Naive thymus-derived CD4-positive, alpha-beta T cell (primary cell): ENCODE measurements at regions of chr14 and their contacts with region 1.

Region 1: DNA sequence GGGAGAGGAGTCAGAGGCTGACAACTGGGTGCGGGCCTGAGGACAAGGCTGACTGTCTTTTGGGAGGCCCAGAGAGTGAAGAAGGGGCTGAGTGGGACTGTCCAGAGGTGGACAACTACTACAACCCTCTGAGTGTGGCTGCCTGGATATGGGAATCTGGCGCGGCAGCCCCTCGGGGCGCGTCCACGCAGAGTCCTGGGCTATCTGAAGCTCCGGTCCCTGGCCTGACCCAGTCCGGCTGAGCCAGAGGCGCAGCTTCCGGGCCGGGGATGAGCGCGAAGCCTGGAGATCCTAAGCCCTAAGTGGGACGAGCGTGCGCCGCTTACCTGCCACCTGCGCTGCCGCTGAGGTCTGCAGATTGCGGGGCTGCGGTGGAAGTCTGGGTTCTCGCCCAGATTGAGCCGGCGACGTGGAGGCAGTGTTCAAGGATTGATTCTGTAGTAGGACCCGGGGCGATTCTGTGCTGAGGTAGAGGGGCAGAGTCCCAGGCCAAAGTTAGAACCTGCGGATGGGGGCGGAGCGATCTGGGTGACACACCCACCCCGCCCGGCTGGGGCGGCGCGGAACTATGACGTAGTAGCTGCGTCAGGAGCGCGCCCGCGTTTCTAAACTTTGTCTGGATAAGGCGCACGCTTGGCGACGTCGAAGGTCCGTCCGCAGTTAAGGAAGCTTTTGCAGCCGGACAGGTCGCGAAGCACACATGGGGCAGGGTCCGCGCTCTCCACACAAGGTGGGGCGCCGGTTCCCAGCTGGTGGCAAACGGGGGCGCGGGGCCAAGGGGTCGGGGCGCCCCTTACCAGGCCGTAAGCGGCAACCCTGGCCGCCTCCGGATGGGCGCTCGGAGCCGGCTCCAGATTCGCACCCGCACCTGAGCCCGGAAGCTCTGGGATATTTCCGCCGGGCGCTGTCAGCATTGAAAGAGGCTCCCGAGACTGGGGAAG is at the starts of genes DHRS1 and NOP9:
- DNase-seq: peak; percentile 86 to 95 (median 92)
- ATAC-seq: peak; percentile 93
- H3K4me3 ChIP-seq: peak within 1 kb of the TSS; percentile 83
- H3K4me3 Mint-ChIP-seq: peak within 1 kb of the TSS; percentile 89 to 97 (median 94)
- H3K27ac ChIP-seq: peak within 1 kb of the TSS; percentile 97
- H3K27ac Mint-ChIP-seq: peak within 1 kb of the TSS; percentile 91 to 98 (median 96)
- H3K4me1 ChIP-seq: peaks cover 19 to 43% of the 10 kb centered on the region in 2 donors
- H3K4me1 Mint-ChIP-seq: peaks cover 28 to 67% (median 55%) of the 10 kb centered on the region in 7 donors
- H3K27me3 ChIP-seq: no peaks in the 10 kb centered on the region
- H3K27me3 Mint-ChIP-seq: no peaks in the 10 kb centered on the region
- total RNA-seq, gene DHRS1: 25.2 to 37.0 (median 33.3) TPM
- total RNA-seq, gene NOP9: 22.7 to 39.5 (median 29.8) TPM

Region 2: DNA sequence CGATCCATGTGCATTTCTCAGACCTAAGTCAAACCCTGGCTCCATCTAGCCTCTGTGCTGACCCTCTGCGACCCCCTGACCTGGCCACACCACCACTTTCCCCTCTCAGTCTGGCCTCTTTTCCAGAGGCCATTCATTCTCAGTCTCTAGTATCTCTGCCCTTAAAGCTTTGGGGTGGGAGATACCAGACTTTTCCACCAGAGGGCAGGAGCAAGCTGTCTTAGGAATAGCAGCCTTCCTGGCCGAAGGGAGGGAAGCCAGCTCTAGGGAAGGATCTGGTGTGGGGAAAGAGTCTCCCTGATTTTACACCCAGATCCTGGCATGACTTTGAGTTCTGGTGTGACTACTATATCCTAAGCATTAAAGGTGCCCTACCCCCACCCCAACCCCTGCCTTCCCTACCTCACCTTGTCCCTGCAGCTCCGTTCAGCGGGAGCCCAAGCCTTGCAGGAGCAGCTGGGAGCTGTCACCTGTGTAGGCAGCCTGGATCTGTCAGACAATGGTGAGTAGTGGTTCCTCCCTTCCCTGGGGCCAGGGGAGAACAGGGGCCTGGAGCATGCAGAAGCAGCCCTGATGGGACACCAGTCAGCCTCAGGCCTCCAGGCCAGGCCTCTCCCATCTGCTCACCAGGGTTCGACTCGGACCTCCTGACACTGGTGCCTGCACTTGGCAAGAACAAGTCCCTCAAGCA is 241.1 kb before region 1 on chr14:
- CTCF ChIA-PET with region 1: interaction called, 8 read pairs
- POLR2A ChIA-PET with region 1: no interaction called
- intact Hi-C with region 1: loop called in 1 of 2 experiments (anchors 1 kb)
- DNase-seq: peak; percentile 22 to 70 (median 49)
- ATAC-seq: peak; percentile 84
- H3K4me3 ChIP-seq: no peak overlapping the region
- H3K4me3 Mint-ChIP-seq: no peak overlapping the region
- H3K27ac ChIP-seq: no peak overlapping the region
- H3K27ac Mint-ChIP-seq: peak overlapping the region in 5 of 9 donors; percentile 22 to 80 (median 67)
- H3K4me1 ChIP-seq: no peaks in the 10 kb centered on the region
- H3K4me1 Mint-ChIP-seq: peaks cover 0 to 8% (median 2%) of the 10 kb centered on the region in 7 donors
- H3K27me3 ChIP-seq: no peaks in the 10 kb centered on the region
- H3K27me3 Mint-ChIP-seq: peaks cover 0 to 8% (median 2%) of the 10 kb centered on the region in 5 donors

Region 3: DNA sequence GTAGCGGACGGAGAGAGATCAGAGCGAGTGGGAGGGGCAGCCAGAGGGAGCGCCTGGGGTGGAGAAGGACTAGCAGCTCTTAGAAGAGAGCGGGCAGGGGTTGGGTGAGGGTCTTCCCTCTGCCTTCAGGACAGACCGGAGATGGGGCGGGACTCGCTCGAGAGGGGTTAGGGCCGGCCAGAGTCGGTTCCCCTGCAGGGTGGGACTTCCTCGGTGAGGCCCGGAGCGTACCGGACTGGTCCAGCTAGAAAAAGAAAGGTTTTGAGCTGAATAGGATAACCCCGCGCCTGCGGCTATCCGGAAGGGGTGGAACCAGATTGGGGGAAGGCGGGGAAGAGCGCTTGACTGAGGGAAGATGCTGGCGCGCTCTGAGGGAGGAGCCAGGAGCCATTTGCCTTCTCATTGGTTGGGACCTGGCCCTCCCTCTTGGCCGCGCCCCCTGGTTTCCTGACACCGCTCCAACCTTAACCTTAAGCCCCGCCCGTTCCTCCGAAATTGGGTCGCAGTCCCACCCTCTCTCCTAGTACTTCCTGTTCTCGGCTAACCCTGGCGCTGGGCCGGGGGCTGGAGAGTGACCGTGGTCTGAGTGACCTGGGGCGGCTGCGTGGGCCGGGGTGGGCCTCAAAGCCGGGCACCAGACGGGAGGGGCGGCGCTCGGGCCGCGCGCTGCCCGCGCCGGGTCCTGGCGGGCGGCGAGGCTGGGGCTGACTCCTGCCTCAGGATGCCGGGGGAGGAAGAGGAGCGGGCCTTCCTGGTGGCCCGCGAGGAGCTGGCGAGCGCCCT is 152.4 kb before region 1 on chr14 and contains the start of gene RNF31:
- CTCF ChIA-PET with region 1: interaction called, 3 read pairs
- POLR2A ChIA-PET with region 1: no interaction called
- intact Hi-C with region 1: loop called in 1 of 2 experiments (anchors 2 kb)
- DNase-seq: peak; percentile 88 to 98 (median 96)
- ATAC-seq: peak; percentile 95
- H3K4me3 ChIP-seq: peak within 1 kb of the TSS; percentile 98
- H3K4me3 Mint-ChIP-seq: peak within 1 kb of the TSS; percentile 91 to 100 (median 98)
- H3K27ac ChIP-seq: peak within 1 kb of the TSS; percentile 88
- H3K27ac Mint-ChIP-seq: peak within 1 kb of the TSS; percentile 94 to 98 (median 96)
- H3K4me1 ChIP-seq: peaks cover 35 to 47% of the 10 kb centered on the region in 2 donors
- H3K4me1 Mint-ChIP-seq: peaks cover 39 to 73% (median 61%) of the 10 kb centered on the region in 7 donors
- H3K27me3 ChIP-seq: no peaks in the 10 kb centered on the region
- H3K27me3 Mint-ChIP-seq: no peaks in the 10 kb centered on the region
- total RNA-seq, gene RNF31: 64.0 to 151 (median 95.4) TPM

Region 4: GRCh38 chr14:24215495-24216344 is 83.8 kb before region 1 on chr14 and contains the start of gene MDP1:
- CTCF ChIA-PET with region 1: interaction called, 3 read pairs
- POLR2A ChIA-PET with region 1: interaction called, 5 read pairs
- intact Hi-C with region 1: loop called (anchors 1 kb)
- DNase-seq: peak; percentile 75 to 89 (median 84)
- ATAC-seq: peak; percentile 85
- H3K4me3 ChIP-seq: peak within 1 kb of the TSS; percentile 95
- H3K4me3 Mint-ChIP-seq: peak within 1 kb of the TSS; percentile 89 to 97 (median 95)
- H3K27ac ChIP-seq: peak within 1 kb of the TSS; percentile 91
- H3K27ac Mint-ChIP-seq: peak within 1 kb of the TSS; percentile 80 to 99 (median 96)
- H3K4me1 ChIP-seq: peaks cover 31 to 36% of the 10 kb centered on the region in 2 donors
- H3K4me1 Mint-ChIP-seq: peaks cover 29 to 62% (median 54%) of the 10 kb centered on the region in 7 donors
- H3K27me3 ChIP-seq: no peaks in the 10 kb centered on the region
- H3K27me3 Mint-ChIP-seq: peaks cover 0 to 2% (median 0%) of the 10 kb centered on the region in 5 donors
- total RNA-seq, gene MDP1: 5.5 to 18.5 (median 14.2) TPM

Region 5: DNA sequence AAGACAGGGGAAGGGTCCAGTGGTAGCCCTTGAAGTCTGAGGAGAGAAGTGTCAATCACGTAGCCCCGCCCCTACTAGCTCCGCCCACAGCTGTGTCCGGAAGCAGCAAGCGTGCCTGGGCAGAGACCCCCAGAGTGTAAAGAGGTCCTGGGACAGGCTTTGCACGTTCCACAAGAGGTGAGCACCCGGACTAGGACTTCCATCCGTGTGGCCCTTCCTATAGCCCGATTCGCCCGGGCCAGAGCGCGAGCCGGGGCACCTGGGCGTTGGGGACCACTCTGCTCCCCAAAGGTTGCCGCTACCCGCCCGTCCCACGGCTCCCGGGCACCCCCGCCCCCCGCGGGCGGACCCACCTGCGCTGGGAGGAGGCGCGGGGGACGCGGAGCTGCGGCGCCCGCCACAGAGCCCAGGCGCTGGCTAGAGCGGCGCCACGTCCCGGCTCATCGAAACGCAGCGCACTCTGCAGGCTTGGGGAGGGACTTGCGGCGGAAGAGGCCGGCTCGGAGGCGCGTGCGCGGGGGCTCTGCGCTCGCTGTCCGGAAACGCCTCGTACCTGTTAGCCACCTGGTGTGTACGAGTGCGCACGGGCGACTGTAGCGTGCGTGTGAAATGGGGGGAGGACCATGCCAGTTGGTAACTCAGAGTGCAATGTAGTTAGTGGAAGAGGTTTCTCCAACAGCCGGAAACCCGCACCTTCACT is 28.2 kb before region 1 on chr14 and contains the start of gene RABGGTA:
- CTCF ChIA-PET with region 1: interaction called, 16 read pairs
- POLR2A ChIA-PET with region 1: interaction called, 48 read pairs
- intact Hi-C with region 1: loop called (anchors 1 kb)
- DNase-seq: peak; percentile 87 to 97 (median 96)
- ATAC-seq: peak; percentile 91
- H3K4me3 ChIP-seq: peak within 1 kb of the TSS; percentile 80
- H3K4me3 Mint-ChIP-seq: peak within 1 kb of the TSS; percentile 79 to 95 (median 92)
- H3K27ac ChIP-seq: peak within 1 kb of the TSS; percentile 98
- H3K27ac Mint-ChIP-seq: peak within 1 kb of the TSS; percentile 93 to 100 (median 98)
- H3K4me1 ChIP-seq: peaks cover 17 to 23% of the 10 kb centered on the region in 2 donors
- H3K4me1 Mint-ChIP-seq: peaks cover 30 to 52% (median 46%) of the 10 kb centered on the region in 7 donors
- H3K27me3 ChIP-seq: no peaks in the 10 kb centered on the region
- H3K27me3 Mint-ChIP-seq: no peaks in the 10 kb centered on the region
- total RNA-seq, gene RABGGTA: 49.7 to 76.5 (median 55.5) TPM

Region 6: DNA sequence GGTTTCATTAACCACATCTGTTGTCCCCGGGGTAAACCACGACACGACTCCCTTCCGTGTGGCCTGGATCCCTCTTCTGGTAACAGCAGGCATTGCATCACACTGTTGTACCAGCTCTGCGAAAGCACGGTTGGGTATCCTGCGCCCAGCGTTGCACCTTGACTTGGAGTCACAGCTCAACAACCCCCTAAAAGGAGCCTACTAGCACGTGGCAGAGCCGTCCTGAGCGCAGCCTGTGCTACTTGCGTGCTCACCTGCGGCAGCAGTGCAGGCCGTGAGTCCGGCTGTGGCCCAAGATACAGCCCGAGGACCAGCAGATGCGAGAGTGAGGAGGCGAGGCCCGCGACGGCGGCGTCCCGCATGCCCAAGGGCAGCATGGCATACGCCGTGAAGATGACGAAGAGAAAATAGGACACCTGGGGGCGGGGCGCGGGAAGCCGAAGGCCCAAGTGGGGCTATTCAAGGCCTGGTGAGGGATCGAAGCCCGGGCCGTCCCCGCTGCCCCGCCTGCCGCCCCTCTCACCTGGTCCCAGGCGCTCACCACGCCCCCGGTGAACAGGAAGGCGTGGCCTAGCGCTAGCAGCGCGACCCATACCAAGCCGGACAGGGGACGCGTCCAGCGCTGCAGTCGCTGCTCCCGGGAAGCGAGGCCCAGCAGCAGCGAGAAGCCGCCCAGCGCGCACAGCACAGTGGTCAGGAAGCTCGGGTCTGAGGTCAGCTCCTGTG is 32.9 kb after region 1 on chr14:
- CTCF ChIA-PET with region 1: interaction called, 23 read pairs
- POLR2A ChIA-PET with region 1: interaction called, 3 read pairs
- intact Hi-C with region 1: loop called in 1 of 2 experiments (anchors 1 kb)
- DNase-seq: peak; percentile 56 to 93 (median 87)
- ATAC-seq: peak; percentile 90
- H3K4me3 ChIP-seq: peak overlapping the region; percentile 43
- H3K4me3 Mint-ChIP-seq: peak overlapping the region; percentile 66 to 94 (median 83)
- H3K27ac ChIP-seq: no peak overlapping the region
- H3K27ac Mint-ChIP-seq: peak overlapping the region; percentile 57 to 93 (median 84)
- H3K4me1 ChIP-seq: peaks cover 37 to 59% of the 10 kb centered on the region in 2 donors
- H3K4me1 Mint-ChIP-seq: peaks cover 25 to 62% (median 40%) of the 10 kb centered on the region in 7 donors
- H3K27me3 ChIP-seq: peaks cover 7 to 13% of the 10 kb centered on the region in 2 donors
- H3K27me3 Mint-ChIP-seq: peaks cover 9 to 46% (median 17%) of the 10 kb centered on the region in 5 donors

Region 7: GRCh38 chr14:25150401-25150800 is 850.9 kb after region 1 on chr14:
- CTCF ChIA-PET with region 1: no interaction called
- POLR2A ChIA-PET with region 1: no interaction called
- intact Hi-C with region 1: no loop called
- DNase-seq: no peak
- ATAC-seq: no peak
- H3K4me3 ChIP-seq: no peak overlapping the region
- H3K4me3 Mint-ChIP-seq: no peak overlapping the region
- H3K27ac ChIP-seq: no peak overlapping the region
- H3K27ac Mint-ChIP-seq: no peak overlapping the region
- H3K4me1 ChIP-seq: no peaks in the 10 kb centered on the region
- H3K4me1 Mint-ChIP-seq: no peaks in the 10 kb centered on the region
- H3K27me3 ChIP-seq: no peaks in the 10 kb centered on the region
- H3K27me3 Mint-ChIP-seq: peaks cover 8 to 30% (median 17%) of the 10 kb centered on the region in 5 donors